IMR-90 (cell line): ENCODE measurements at regions of chr11 and their contacts with region 1.

Region 1: GRCh38 chr11:132140056-132140455 is 769.6 kb downstream of the NTM start:
- DNase-seq: no peak
- ATAC-seq: no peak
- H3K4me3 ChIP-seq: no peak overlapping the region
- H3K27ac ChIP-seq: no peak overlapping the region
- H3K4me1 ChIP-seq: no peaks in the 10 kb centered on the region
- H3K27me3 ChIP-seq: no peaks in the 10 kb centered on the region
- CTCF ChIP-seq: no peak
- POLR2A ChIP-seq: no peak
- RAD21 ChIP-seq: no peak

Region 2: DNA sequence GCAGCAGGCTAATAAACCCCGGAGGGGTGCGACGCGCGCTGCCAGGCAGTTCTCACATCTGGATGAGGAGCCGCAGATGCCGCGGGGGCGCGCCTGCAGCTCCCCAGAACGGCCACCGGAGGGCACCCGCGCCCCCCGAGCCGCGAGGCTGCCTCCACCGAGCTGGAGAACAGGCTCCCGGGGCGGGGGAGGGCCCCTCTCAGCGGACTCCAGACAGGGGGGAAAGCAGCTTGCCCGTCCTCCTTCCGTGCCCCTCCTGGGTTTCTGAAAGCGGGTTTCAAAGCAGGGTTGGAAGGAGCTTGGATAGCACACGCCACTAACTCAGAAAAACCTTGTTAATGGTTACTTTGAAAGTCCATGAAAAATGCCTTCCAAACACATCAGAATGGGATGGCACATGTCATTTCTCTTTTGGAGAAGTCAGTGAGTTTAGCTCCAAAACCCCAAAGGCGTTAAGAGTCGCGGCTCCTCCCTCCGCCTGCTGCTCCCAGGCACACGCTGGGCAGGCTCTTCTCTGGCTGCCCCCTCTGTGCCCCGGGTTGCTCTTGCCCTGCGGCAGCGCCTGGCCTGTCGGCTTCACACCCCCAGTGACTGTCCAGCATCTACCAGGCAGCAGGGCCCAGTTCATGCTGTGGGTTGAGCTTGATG is 451.9 kb before region 1 on chr11:
- CTCF ChIA-PET with region 1: no interaction called
- POLR2A ChIA-PET with region 1: no interaction called
- dilution Hi-C with region 1: no loop called
- in situ Hi-C with region 1: loop called (anchors 5 kb)
- intact Hi-C with region 1: no loop called
- DNase-seq: peak; percentile 41
- ATAC-seq: peak; percentile 96
- H3K4me3 ChIP-seq: peak overlapping the region; percentile 36
- H3K27ac ChIP-seq: no peak overlapping the region
- H3K4me1 ChIP-seq: peaks cover 3% of the 10 kb centered on the region; the same call in 1 of the 2 replicates
- H3K27me3 ChIP-seq: peaks cover 17% of the 10 kb centered on the region
- CTCF ChIP-seq: peak; percentile 80
- POLR2A ChIP-seq: no peak
- RAD21 ChIP-seq: peak; percentile 73

Region 3: GRCh38 chr11:131889146-131889577 is 250.9 kb before region 1 on chr11:
- CTCF ChIA-PET with region 1: no interaction called
- POLR2A ChIA-PET with region 1: no interaction called
- dilution Hi-C with region 1: no loop called
- in situ Hi-C with region 1: no loop called
- intact Hi-C with region 1: no loop called
- DNase-seq: peak; percentile 95
- ATAC-seq: peak; percentile 60
- H3K4me3 ChIP-seq: no peak overlapping the region
- H3K27ac ChIP-seq: peak overlapping the region; percentile 68
- H3K4me1 ChIP-seq: peaks cover 19% of the 10 kb centered on the region
- H3K27me3 ChIP-seq: no peaks in the 10 kb centered on the region
- CTCF ChIP-seq: no peak
- POLR2A ChIP-seq: no peak
- RAD21 ChIP-seq: no peak

Region 4: GRCh38 chr11:132022733-132023478 is 117.2 kb before region 1 on chr11:
- CTCF ChIA-PET with region 1: no interaction called
- POLR2A ChIA-PET with region 1: no interaction called
- dilution Hi-C with region 1: no loop called
- in situ Hi-C with region 1: no loop called
- intact Hi-C with region 1: no loop called
- DNase-seq: peak; percentile 81
- ATAC-seq: peak; percentile 50
- H3K4me3 ChIP-seq: no peak overlapping the region
- H3K27ac ChIP-seq: peak overlapping the region; percentile 64; the same call in 1 of the 2 replicates
- H3K4me1 ChIP-seq: peaks cover 17% of the 10 kb centered on the region
- H3K27me3 ChIP-seq: no peaks in the 10 kb centered on the region
- CTCF ChIP-seq: no peak
- POLR2A ChIP-seq: no peak
- RAD21 ChIP-seq: no peak

Region 5: GRCh38 chr11:132361011-132361550 is 221.0 kb after region 1 on chr11:
- CTCF ChIA-PET with region 1: no interaction called
- POLR2A ChIA-PET with region 1: no interaction called
- dilution Hi-C with region 1: no loop called
- in situ Hi-C with region 1: no loop called
- intact Hi-C with region 1: loop called (anchors 10 kb)
- DNase-seq: no peak
- ATAC-seq: no peak
- H3K4me3 ChIP-seq: no peak overlapping the region
- H3K27ac ChIP-seq: no peak overlapping the region
- H3K4me1 ChIP-seq: no peaks in the 10 kb centered on the region
- H3K27me3 ChIP-seq: peaks cover 3% of the 10 kb centered on the region; the same call in 1 of the 2 replicates
- CTCF ChIP-seq: no peak
- POLR2A ChIP-seq: no peak
- RAD21 ChIP-seq: no peak